ENCODE measurements at regions of chr9 and their contacts with region 1.

Region 1: DNA sequence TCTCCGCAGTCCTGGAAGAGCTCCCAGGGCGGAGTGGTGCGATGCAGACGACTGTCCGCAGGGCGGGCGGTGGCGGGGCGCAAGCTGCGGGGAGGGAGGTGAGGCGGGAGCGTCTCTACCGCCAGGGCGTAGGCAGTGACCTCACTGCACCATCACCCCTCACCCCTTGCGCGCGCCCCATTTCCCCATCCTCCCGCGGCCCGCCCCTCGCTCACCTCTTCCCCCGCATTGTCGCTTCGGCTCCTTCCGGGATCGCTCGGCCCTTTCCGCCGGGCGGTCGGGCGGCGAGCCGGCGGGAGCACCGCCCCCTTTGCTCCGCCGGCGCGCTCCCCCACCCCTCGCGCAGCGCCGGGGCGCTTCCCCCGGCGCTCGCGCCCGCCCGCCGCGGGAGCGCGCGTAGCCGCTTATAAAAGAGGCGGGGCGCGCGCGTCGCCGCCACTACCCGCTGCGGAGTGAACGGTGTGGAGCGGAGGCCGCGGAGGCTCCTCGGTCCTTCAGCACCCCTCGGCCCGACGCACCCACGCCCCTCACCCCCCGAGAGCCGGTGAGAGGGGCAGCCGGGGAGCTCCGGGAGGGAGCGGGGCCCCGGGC is at the start of gene SPTAN1:
- DNase-seq: no peak
- H3K4me3 ChIP-seq: peak within 1 kb of the TSS; percentile 78
- CTCF ChIP-seq: peak; percentile 28

Region 2: GRCh38 chr9:128504485-128505413 is 47.5 kb before region 1 on chr9 and contains the start of gene GLE1:
- CTCF ChIA-PET with region 1: no interaction called
- POLR2A ChIA-PET with region 1: interaction called, 25 read pairs
- DNase-seq: peak; percentile 34
- H3K4me3 ChIP-seq: peak within 1 kb of the TSS; percentile 99
- CTCF ChIP-seq: no peak

Region 3: GRCh38 chr9:128540634-128541360 is 11.5 kb before region 1 on chr9:
- CTCF ChIA-PET with region 1: interaction called, 17 read pairs
- POLR2A ChIA-PET with region 1: interaction called, 15 read pairs
- DNase-seq: no peak
- H3K4me3 ChIP-seq: no peak overlapping the region
- CTCF ChIP-seq: no peak